GM12878 (cell line): ENCODE measurements at regions of chr6 and their contacts with region 1.

Region 1: GRCh38 chr6:11496152-11497060 is 41.1 kb upstream of the TMEM170B start:
- DNase-seq: peak; percentile 84
- ATAC-seq: peak; percentile 77
- H3K4me3 ChIP-seq: no peak overlapping the region
- H3K27ac ChIP-seq: peak overlapping the region; percentile 68
- H3K4me1 ChIP-seq: peaks cover 56% of the 10 kb centered on the region
- H3K27me3 ChIP-seq: no peaks in the 10 kb centered on the region
- CTCF ChIP-seq: peak; percentile 76 to 96 (median 88)
- EP300 ChIP-seq: no peak
- POLR2A ChIP-seq: no peak
- RAD21 ChIP-seq: peak; percentile 99

Region 2: GRCh38 chr6:11139056-11139960 is 357.1 kb before region 1 on chr6:
- CTCF ChIA-PET with region 1: interaction called, 152 read pairs
- POLR2A ChIA-PET with region 1: interaction called, 7 read pairs
- RAD21 ChIA-PET with region 1: interaction called, 98 read pairs
- SMC1A ChIA-PET with region 1: interaction called, 208 read pairs
- in situ Hi-C with region 1: loop called (anchors 5 kb)
- intact Hi-C with region 1: loop called (anchors 1 kb)
- DNase-seq: no peak
- ATAC-seq: peak; percentile 80
- H3K4me3 ChIP-seq: no peak overlapping the region
- H3K27ac ChIP-seq: no peak overlapping the region
- H3K4me1 ChIP-seq: peaks cover 5% of the 10 kb centered on the region; the same call in 1 of the 2 replicates
- H3K27me3 ChIP-seq: no peaks in the 10 kb centered on the region
- CTCF ChIP-seq: no peak
- EP300 ChIP-seq: 0 out of 4 replicates have a peak, but pooled peaks of 1 of the 2 experiments have one; percentile 36
- POLR2A ChIP-seq: no peak
- RAD21 ChIP-seq: no peak

Region 3: GRCh38 chr6:11224252-11224965 is 272.0 kb before region 1 on chr6:
- CTCF ChIA-PET with region 1: interaction called, 15 read pairs
- POLR2A ChIA-PET with region 1: interaction called, 4 read pairs
- RAD21 ChIA-PET with region 1: interaction called, 4 read pairs
- SMC1A ChIA-PET with region 1: interaction called, 39 read pairs
- in situ Hi-C with region 1: no loop called
- intact Hi-C with region 1: no loop called
- DNase-seq: peak; percentile 43
- ATAC-seq: peak; percentile 82
- H3K4me3 ChIP-seq: no peak overlapping the region
- H3K27ac ChIP-seq: 0 out of 2 replicates have a peak overlapping the region, but pooled peaks have one; percentile 25
- H3K4me1 ChIP-seq: peaks cover 21% of the 10 kb centered on the region
- H3K27me3 ChIP-seq: no peaks in the 10 kb centered on the region
- CTCF ChIP-seq: no peak
- EP300 ChIP-seq: no peak
- POLR2A ChIP-seq: no peak
- RAD21 ChIP-seq: 0 out of 2 replicates have a peak, but pooled peaks have one; percentile 6

Region 4: GRCh38 chr6:11346516-11346915 is 149.9 kb before region 1 on chr6:
- CTCF ChIA-PET with region 1: interaction called, 15 read pairs
- POLR2A ChIA-PET with region 1: no interaction called
- RAD21 ChIA-PET with region 1: interaction called, 41 read pairs
- SMC1A ChIA-PET with region 1: interaction called, 45 read pairs
- in situ Hi-C with region 1: no loop called
- intact Hi-C with region 1: no loop called
- DNase-seq: peak; percentile 71
- ATAC-seq: peak; percentile 87
- H3K4me3 ChIP-seq: no peak overlapping the region
- H3K27ac ChIP-seq: peak overlapping the region; percentile 65
- H3K4me1 ChIP-seq: peaks cover 39% of the 10 kb centered on the region
- H3K27me3 ChIP-seq: no peaks in the 10 kb centered on the region
- CTCF ChIP-seq: no peak
- EP300 ChIP-seq: peak in 1 of 2 experiments; percentile 22; a peak in 1 of 4 replicates
- POLR2A ChIP-seq: no peak
- RAD21 ChIP-seq: no peak

Region 5: DNA sequence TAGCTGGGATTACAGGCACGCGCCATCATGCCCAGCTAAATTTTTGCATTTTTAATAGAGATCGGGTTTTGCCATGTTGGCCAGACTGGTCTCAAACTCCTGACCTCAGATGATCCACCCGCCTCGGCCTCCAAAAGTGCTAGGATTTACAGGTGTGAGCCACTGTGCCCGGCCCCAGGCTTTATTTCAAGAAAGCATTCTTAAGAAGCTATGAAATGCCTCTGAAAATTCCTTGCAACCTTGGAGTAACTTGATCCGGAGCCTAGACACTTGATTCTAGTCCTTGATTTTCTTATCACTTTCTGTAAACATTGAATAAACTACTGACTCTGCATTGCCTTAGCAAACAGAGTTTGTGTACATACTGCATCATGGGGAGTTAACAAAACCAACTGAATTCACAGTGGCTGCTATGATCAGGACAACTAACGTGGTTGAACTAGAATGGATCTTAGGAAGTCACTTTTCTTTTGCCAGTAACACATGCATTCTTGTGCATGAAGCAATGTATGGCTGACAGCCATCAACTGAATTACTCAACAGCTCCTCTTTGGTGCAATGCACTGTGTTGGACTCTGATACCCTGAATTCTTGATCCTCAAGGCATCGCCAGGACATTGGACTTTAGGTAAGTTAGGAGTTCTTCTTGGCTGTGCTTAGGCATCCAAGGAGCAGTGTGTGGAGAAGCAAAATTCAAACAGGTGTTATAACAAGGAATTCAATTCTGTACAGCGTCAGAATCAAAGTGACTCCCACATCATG is 61.7 kb before region 1 on chr6:
- CTCF ChIA-PET with region 1: interaction called, 7 read pairs
- POLR2A ChIA-PET with region 1: interaction called, 6 read pairs
- RAD21 ChIA-PET with region 1: interaction called, 27 read pairs
- SMC1A ChIA-PET with region 1: interaction called, 35 read pairs
- in situ Hi-C with region 1: no loop called
- intact Hi-C with region 1: loop called (anchors 1 kb)
- DNase-seq: no peak
- ATAC-seq: no peak
- H3K4me3 ChIP-seq: no peak overlapping the region
- H3K27ac ChIP-seq: no peak overlapping the region
- H3K4me1 ChIP-seq: peaks cover 13% of the 10 kb centered on the region
- H3K27me3 ChIP-seq: no peaks in the 10 kb centered on the region
- CTCF ChIP-seq: no peak
- EP300 ChIP-seq: no peak
- POLR2A ChIP-seq: no peak
- RAD21 ChIP-seq: no peak

Region 6: GRCh38 chr6:11509471-11509870 is 13.1 kb after region 1 on chr6:
- CTCF ChIA-PET with region 1: interaction called, 47 read pairs
- POLR2A ChIA-PET with region 1: interaction called, 3 read pairs
- RAD21 ChIA-PET with region 1: interaction called, 60 read pairs
- SMC1A ChIA-PET with region 1: interaction called, 109 read pairs
- in situ Hi-C with region 1: no loop called
- intact Hi-C with region 1: loop called (anchors 1 kb)
- DNase-seq: no peak
- ATAC-seq: no peak
- H3K4me3 ChIP-seq: no peak overlapping the region
- H3K27ac ChIP-seq: no peak overlapping the region
- H3K4me1 ChIP-seq: peaks cover 12% of the 10 kb centered on the region
- H3K27me3 ChIP-seq: no peaks in the 10 kb centered on the region
- CTCF ChIP-seq: no peak
- EP300 ChIP-seq: no peak
- POLR2A ChIP-seq: no peak
- RAD21 ChIP-seq: no peak

Region 7: GRCh38 chr6:11575408-11576033 is 79.1 kb after region 1 on chr6:
- CTCF ChIA-PET with region 1: interaction called, 159 read pairs
- POLR2A ChIA-PET with region 1: interaction called, 8 read pairs
- RAD21 ChIA-PET with region 1: interaction called, 92 read pairs
- SMC1A ChIA-PET with region 1: interaction called, 117 read pairs
- in situ Hi-C with region 1: no loop called
- intact Hi-C with region 1: loop called (anchors 1 kb)
- DNase-seq: peak; percentile 74
- ATAC-seq: peak; percentile 100
- H3K4me3 ChIP-seq: no peak overlapping the region
- H3K27ac ChIP-seq: no peak overlapping the region
- H3K4me1 ChIP-seq: no peaks in the 10 kb centered on the region; the same call in 1 of the 2 replicates
- H3K27me3 ChIP-seq: no peaks in the 10 kb centered on the region
- CTCF ChIP-seq: peak; percentile 92 to 99 (median 97); a peak in 5 of 6 replicates
- EP300 ChIP-seq: no peak
- POLR2A ChIP-seq: no peak
- RAD21 ChIP-seq: peak; percentile 97